Activated CD8-positive, alpha-beta T cell treated with anti-CD3 and anti-CD28 coated beads, Interleukin-2, amount 10 ng/mL, durations not matched to agents 7 days and 5 days (primary cell): ENCODE measurements at regions of chr4 and their contacts with region 1.

Region 1: GRCh38 chr4:139301113-139301820 is at the start of gene NAA15:
- DNase-seq: peak; percentile 98
- ATAC-seq: peak; percentile 94
- H3K4me3 Mint-ChIP-seq: peak within 1 kb of the TSS; percentile 99
- H3K27ac Mint-ChIP-seq: peak within 1 kb of the TSS; percentile 100
- H3K4me1 Mint-ChIP-seq: peaks cover 58% of the 10 kb centered on the region
- H3K27me3 Mint-ChIP-seq: no peaks in the 10 kb centered on the region
- total RNA-seq, gene NAA15: 61.2 to 66.2 TPM

Region 2: DNA sequence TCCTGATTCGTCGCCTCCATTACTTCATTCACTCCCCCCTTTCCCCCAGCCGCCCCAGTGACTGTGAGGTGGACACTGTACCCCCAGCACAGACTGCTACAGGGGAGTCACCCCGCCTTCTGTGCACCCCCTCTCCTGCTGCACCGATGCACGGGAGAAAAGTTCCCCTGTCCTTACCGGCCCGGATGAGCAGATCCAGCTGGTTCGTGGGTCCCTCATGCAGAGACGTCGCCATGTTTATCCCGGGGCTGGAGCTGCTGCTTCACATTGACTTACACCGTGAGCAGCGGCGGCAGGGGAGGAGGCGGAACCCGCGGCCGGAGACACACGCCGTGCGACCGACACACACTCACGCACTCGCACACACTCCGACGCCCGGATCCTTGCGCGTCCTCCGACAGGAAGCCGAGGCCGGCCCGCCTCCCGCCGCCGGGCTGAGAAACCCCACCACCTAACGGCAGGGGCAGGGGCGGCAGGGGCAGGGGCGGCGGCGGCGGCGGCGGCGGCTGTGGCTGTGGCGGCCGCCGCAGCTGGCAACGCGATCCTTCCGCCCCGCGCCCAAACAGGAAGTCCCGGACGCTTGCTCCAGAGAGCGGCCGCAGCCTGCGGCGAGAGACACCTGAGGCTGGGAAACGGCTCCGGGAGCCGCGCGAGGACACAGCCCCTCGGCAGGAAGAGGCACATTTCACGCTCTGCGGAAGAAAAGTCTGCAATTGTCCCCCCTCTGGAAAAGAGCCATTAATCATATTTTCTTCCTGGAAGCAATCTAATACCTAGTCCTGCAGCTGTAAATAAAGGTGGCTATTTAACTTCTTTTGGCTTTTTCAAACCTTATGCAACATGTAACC is 217.1 kb before region 1 on chr4:
- CTCF ChIA-PET with region 1: interaction called, 10 read pairs
- POLR2A ChIA-PET with region 1: interaction called, 24 read pairs
- DNase-seq: peak; percentile 85
- ATAC-seq: peak; percentile 66
- H3K4me3 Mint-ChIP-seq: peak overlapping the region; percentile 99
- H3K27ac Mint-ChIP-seq: peak overlapping the region; percentile 99
- H3K4me1 Mint-ChIP-seq: peaks cover 33% of the 10 kb centered on the region
- H3K27me3 Mint-ChIP-seq: no peaks in the 10 kb centered on the region

Region 3: GRCh38 chr4:139177868-139178611 is 123.2 kb before region 1 on chr4:
- CTCF ChIA-PET with region 1: interaction called, 10 read pairs
- POLR2A ChIA-PET with region 1: interaction called, 28 read pairs
- DNase-seq: peak; percentile 94
- ATAC-seq: peak; percentile 78
- H3K4me3 Mint-ChIP-seq: peak overlapping the region; percentile 82
- H3K27ac Mint-ChIP-seq: peak overlapping the region; percentile 89
- H3K4me1 Mint-ChIP-seq: peaks cover 13% of the 10 kb centered on the region
- H3K27me3 Mint-ChIP-seq: peaks cover 32% of the 10 kb centered on the region

Region 4: GRCh38 chr4:139319571-139319970 is 18.3 kb after region 1 on chr4:
- CTCF ChIA-PET with region 1: interaction called, 4 read pairs
- POLR2A ChIA-PET with region 1: interaction called, 14 read pairs
- DNase-seq: no peak
- ATAC-seq: no peak
- H3K4me3 Mint-ChIP-seq: no peak overlapping the region
- H3K27ac Mint-ChIP-seq: no peak overlapping the region
- H3K4me1 Mint-ChIP-seq: peaks cover 45% of the 10 kb centered on the region
- H3K27me3 Mint-ChIP-seq: no peaks in the 10 kb centered on the region

Region 5: DNA sequence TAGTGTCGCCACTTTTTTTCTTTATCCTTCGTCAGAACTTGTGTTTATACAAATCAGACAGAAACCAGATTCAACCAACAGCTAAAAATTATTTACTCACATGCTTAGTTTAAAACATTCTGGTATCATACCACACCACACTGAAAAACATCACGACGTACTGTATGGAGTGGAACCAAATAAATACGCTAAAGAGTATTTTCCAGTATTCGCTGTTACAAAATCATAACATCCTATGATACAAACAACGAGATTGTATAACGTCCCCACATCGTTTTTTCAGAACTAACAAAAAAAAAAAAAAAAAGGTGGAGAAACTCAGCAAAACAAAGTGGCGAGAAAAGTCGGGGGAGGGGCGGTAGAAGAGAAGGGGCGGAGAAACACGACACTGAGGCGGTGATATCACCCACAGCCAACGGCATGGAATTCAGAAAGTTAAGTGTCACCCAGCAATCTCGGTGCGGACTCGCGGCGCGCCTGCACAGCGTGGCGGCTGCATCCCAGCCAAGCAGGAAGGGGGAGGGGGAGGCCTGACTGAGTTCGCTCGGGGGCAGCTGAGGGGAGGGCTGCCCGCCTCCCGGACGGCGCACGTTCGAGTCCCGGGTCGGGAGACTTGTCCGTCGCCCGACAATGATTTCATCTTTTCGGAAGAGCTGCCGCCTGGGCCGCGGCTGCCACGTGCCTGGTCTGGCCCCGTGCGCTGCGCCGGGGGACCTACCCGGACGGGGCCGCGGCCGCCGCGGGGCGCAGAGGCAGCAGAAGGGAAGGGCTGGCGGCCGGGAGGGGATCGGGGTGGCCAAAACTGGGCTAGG is 253.8 kb after region 1 on chr4:
- CTCF ChIA-PET with region 1: no interaction called
- POLR2A ChIA-PET with region 1: interaction called, 11 read pairs
- DNase-seq: peak; percentile 84
- ATAC-seq: peak; percentile 59
- H3K4me3 Mint-ChIP-seq: peak overlapping the region; percentile 91
- H3K27ac Mint-ChIP-seq: peak overlapping the region; percentile 96
- H3K4me1 Mint-ChIP-seq: peaks cover 47% of the 10 kb centered on the region
- H3K27me3 Mint-ChIP-seq: peaks cover 9% of the 10 kb centered on the region